ENCODE measurements at regions of chr11 and their contacts with region 1.

Region 1: DNA sequence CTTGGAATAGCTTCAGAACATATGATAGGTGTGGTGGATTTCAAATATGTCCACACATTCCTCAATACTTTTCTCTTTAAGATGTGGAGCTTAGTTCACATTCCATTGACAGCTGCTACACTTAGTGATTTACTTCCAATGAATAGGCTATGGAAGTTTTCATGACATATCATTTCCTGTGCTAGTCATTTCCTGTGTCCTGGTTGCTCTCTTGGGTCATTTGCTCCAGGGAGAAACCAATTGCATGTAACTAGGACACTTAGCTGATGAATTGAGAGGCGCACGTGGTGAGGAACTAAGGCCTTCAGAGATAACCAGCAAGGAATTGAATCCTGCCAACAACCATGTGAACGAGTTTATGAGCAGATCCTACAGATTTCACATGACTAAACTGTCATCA is 120.9 kb downstream of the SLC17A6 start:
- DNase-seq: peak; percentile 83
- H3K4me3 ChIP-seq: no peak overlapping the region
- H3K27ac ChIP-seq: peak overlapping the region; percentile 62
- H3K4me1 ChIP-seq: peaks cover 13% of the 10 kb centered on the region
- H3K27me3 ChIP-seq: no peaks in the 10 kb centered on the region
- CTCF ChIP-seq: no peak
- POLR2A ChIP-seq: no peak

Region 2: DNA sequence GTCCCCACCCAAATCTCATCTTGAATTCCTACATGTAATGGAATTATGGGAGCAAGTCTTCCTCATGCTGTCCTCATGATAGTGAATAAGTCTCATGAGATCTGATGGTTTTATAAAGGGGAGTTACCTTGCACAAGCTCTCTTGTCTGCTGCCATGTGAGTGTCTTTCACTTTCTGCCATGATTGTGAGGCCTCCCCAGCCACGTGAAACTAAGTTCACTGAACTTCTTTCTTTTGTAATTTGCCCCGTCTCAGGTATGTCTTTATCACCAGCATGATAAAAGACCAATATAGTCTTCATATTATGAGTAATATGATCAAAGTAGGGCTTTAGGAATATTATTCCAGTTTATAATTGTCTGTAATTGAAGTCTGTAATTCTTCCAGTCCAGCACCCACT is 352.5 kb before region 1 on chr11:
- CTCF ChIA-PET with region 1: no interaction called
- POLR2A ChIA-PET with region 1: no interaction called
- dilution Hi-C with region 1: no loop called
- intact Hi-C with region 1: no loop called
- DNase-seq: no peak
- H3K4me3 ChIP-seq: no peak overlapping the region
- H3K27ac ChIP-seq: no peak overlapping the region
- H3K4me1 ChIP-seq: no peaks in the 10 kb centered on the region
- H3K27me3 ChIP-seq: no peaks in the 10 kb centered on the region
- CTCF ChIP-seq: no peak
- POLR2A ChIP-seq: no peak

Region 3: GRCh38 chr11:22432291-22433093 is 26.6 kb before region 1 on chr11:
- CTCF ChIA-PET with region 1: interaction called, 5 read pairs
- POLR2A ChIA-PET with region 1: no interaction called
- dilution Hi-C with region 1: no loop called
- intact Hi-C with region 1: loop called (anchors 1 kb)
- DNase-seq: peak; percentile 82
- H3K4me3 ChIP-seq: peak overlapping the region; percentile 20 to 46 (median 45)
- H3K27ac ChIP-seq: peak overlapping the region; percentile 32
- H3K4me1 ChIP-seq: peaks cover 10% of the 10 kb centered on the region
- H3K27me3 ChIP-seq: no peaks in the 10 kb centered on the region
- CTCF ChIP-seq: no peak
- POLR2A ChIP-seq: no peak

Measured in endothelial cell of umbilical vein (primary cell).